ENCODE measurements at regions of chr15 and their contacts with region 1.

Region 1: DNA sequence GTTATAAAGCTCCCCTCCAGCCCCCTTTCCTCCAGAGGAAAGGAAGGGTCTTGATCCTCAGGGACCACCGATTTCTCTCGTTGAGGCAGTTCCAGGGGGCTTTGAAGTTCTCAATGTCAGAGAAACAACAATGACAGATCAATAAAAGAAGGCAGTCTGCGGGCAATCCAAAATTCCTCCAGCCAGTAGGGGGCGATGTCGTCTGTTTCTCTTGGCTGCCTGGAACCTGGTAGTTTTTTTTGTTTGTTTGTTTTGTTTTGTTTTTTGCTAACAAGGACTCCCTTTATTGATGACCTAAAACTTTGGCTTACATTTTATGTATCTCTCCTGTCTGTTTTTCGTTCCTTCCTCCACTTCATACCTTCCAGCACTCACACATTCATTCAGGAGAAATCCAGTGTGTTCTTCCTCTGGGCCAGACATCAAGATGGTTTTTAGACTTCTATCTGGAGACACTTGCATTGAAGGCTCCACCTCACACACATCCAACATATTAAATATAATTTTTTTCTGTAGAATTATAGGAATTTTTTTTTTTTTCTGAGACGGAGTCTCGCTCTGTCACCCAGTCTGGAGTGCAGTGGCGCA is 276.6 kb downstream of the RPLP1 start:
- DNase-seq: peak; percentile 65 to 90 (median 76)
- ATAC-seq: peak; percentile 58
- H3K4me3 ChIP-seq: no peak overlapping the region
- H3K4me3 Mint-ChIP-seq: no peak overlapping the region
- H3K27ac ChIP-seq: no peak overlapping the region
- H3K27ac Mint-ChIP-seq: no peak overlapping the region
- H3K4me1 ChIP-seq: peaks cover 23% of the 10 kb centered on the region
- H3K4me1 Mint-ChIP-seq: peaks cover 17% of the 10 kb centered on the region
- H3K27me3 ChIP-seq: no peaks in the 10 kb centered on the region
- H3K27me3 Mint-ChIP-seq: no peaks in the 10 kb centered on the region
- CTCF ChIP-seq: peak; percentile 96

Region 2: GRCh38 chr15:69576035-69576526 is 153.2 kb before region 1 on chr15:
- CTCF ChIA-PET with region 1: no interaction called
- POLR2A ChIA-PET with region 1: no interaction called
- intact Hi-C with region 1: loop called (anchors 5 kb)
- DNase-seq: peak; percentile 44 to 81 (median 69)
- ATAC-seq: peak; percentile 76
- H3K4me3 ChIP-seq: no peak overlapping the region
- H3K4me3 Mint-ChIP-seq: no peak overlapping the region
- H3K27ac ChIP-seq: no peak overlapping the region
- H3K27ac Mint-ChIP-seq: no peak overlapping the region
- H3K4me1 ChIP-seq: peaks cover 34% of the 10 kb centered on the region
- H3K4me1 Mint-ChIP-seq: peaks cover 33% of the 10 kb centered on the region
- H3K27me3 ChIP-seq: no peaks in the 10 kb centered on the region
- H3K27me3 Mint-ChIP-seq: no peaks in the 10 kb centered on the region
- CTCF ChIP-seq: peak; percentile 78

Region 3: GRCh38 chr15:69794645-69795461 is 65.6 kb after region 1 on chr15:
- CTCF ChIA-PET with region 1: no interaction called
- POLR2A ChIA-PET with region 1: no interaction called
- intact Hi-C with region 1: no loop called
- DNase-seq: no peak
- ATAC-seq: no peak
- H3K4me3 ChIP-seq: no peak overlapping the region
- H3K4me3 Mint-ChIP-seq: no peak overlapping the region
- H3K27ac ChIP-seq: no peak overlapping the region
- H3K27ac Mint-ChIP-seq: no peak overlapping the region
- H3K4me1 ChIP-seq: no peaks in the 10 kb centered on the region
- H3K4me1 Mint-ChIP-seq: no peaks in the 10 kb centered on the region
- H3K27me3 ChIP-seq: peaks cover 0 to 4% of the 10 kb centered on the region in 2 experiments
- H3K27me3 Mint-ChIP-seq: no peaks in the 10 kb centered on the region
- CTCF ChIP-seq: no peak

Region 4: GRCh38 chr15:70023064-70023768 is 294.0 kb after region 1 on chr15:
- CTCF ChIA-PET with region 1: no interaction called
- POLR2A ChIA-PET with region 1: no interaction called
- intact Hi-C with region 1: loop called in 1 of 2 experiments (anchors 10 kb)
- DNase-seq: peak in 13 of 14 experiments; percentile 18 to 91 (median 40)
- ATAC-seq: peak; percentile 98
- H3K4me3 ChIP-seq: no peak overlapping the region
- H3K4me3 Mint-ChIP-seq: no peak overlapping the region
- H3K27ac ChIP-seq: no peak overlapping the region
- H3K27ac Mint-ChIP-seq: peak overlapping the region; percentile 48
- H3K4me1 ChIP-seq: peaks cover 20% of the 10 kb centered on the region
- H3K4me1 Mint-ChIP-seq: peaks cover 10% of the 10 kb centered on the region
- H3K27me3 ChIP-seq: no peaks in the 10 kb centered on the region
- H3K27me3 Mint-ChIP-seq: no peaks in the 10 kb centered on the region
- CTCF ChIP-seq: no peak

Region 5: DNA sequence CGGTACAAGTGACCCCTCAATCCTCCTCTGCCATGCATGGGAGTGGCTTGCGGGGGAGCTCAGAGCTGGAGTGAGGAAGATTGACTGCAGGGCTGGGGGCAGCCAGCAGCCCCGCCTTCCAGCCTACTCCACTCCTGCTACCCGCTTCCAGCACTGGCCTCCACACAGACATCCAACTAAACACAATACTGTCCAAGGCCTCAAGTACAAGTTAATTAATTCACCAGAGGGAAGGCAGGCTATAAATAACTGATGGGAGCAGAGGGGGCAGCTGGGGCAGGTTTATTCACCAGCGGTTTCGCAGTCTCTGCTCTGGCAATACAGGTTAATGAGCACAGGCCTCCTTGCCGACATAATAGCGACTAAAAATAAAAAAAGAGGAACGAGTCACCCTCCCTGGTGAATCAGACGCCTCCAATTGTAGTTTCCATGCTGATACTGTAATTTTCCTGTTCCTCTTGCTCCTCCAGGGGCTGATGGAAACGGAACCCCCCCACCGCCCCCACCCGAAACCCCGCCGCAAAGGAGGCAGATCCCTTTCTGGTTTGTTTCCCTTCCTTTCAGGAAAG is 534.8 kb after region 1 on chr15:
- CTCF ChIA-PET with region 1: no interaction called
- POLR2A ChIA-PET with region 1: no interaction called
- intact Hi-C with region 1: loop called in 1 of 2 experiments (anchors 5 kb)
- DNase-seq: peak in 3 of 14 experiments; percentile 27 to 57 (median 46)
- ATAC-seq: no peak
- H3K4me3 ChIP-seq: no peak overlapping the region
- H3K4me3 Mint-ChIP-seq: no peak overlapping the region
- H3K27ac ChIP-seq: no peak overlapping the region
- H3K27ac Mint-ChIP-seq: no peak overlapping the region
- H3K4me1 ChIP-seq: peaks cover 56% of the 10 kb centered on the region
- H3K4me1 Mint-ChIP-seq: peaks cover 41% of the 10 kb centered on the region
- H3K27me3 ChIP-seq: no peaks in the 10 kb centered on the region
- H3K27me3 Mint-ChIP-seq: peaks cover 4% of the 10 kb centered on the region
- CTCF ChIP-seq: no peak